ENCODE measurements at regions of chr17 and their contacts with region 1.

Region 1: DNA sequence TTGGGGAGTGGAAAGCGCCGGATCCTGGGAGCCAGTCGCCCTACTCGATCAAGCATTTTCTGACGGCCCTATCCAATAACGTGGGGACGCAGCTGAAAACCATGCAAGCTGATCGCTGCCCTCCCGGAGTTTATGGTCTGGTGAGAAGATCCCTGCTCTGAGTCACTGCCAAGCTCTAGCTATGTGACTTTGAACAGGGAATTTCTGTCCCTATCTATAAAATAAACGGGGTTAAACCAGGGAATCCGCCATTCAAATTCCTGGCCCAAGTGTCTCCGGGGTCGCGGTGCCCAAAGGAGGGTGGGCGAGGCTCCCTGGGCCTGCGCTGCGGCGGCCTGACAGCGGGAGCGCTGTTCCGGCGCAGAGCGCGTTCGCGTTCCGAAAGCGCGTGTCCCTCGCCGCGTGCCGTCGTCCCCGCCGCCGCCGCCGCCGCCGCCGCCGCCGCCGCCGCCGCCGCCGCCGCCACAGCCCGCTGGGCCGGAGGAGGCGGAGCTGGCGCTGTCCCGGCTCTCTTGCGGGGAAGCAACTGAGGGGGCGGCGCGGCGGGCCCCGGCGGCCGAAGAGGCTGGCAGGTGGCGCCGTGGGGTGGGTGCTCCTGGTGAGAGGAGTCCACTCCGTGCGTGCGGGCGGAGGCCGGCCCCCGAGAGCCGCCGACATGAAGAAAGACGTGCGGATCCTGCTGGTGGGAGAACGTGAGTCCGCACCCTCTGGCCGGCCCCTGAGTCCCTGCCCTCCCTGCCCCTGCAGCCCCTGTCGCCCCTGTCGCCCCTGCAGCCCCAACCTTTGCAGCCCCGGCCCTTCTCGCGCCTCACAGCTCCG is at the start of gene RHOT1:
- DNase-seq: peak; percentile 86
- H3K4me3 Mint-ChIP-seq: peak within 1 kb of the TSS; percentile 96
- H3K27ac Mint-ChIP-seq: peak within 1 kb of the TSS; percentile 87
- H3K4me1 Mint-ChIP-seq: peaks cover 13% of the 10 kb centered on the region
- H3K27me3 Mint-ChIP-seq: no peaks in the 10 kb centered on the region
- CTCF ChIP-seq: peak; percentile 47
- total RNA-seq, gene RHOT1: 19.8 and 21.9 TPM in 2 replicates

Region 2: GRCh38 chr17:32127158-32127897 is 14.9 kb before region 1 on chr17:
- CTCF ChIA-PET with region 1: interaction called, 30 read pairs
- POLR2A ChIA-PET with region 1: interaction called, 28 read pairs
- intact Hi-C with region 1: no loop called
- DNase-seq: peak; percentile 83
- H3K4me3 Mint-ChIP-seq: peak overlapping the region; percentile 86
- H3K27ac Mint-ChIP-seq: peak overlapping the region; percentile 92
- H3K4me1 Mint-ChIP-seq: peaks cover 5% of the 10 kb centered on the region
- H3K27me3 Mint-ChIP-seq: no peaks in the 10 kb centered on the region
- CTCF ChIP-seq: no peak